ENCODE measurements at regions of chr14 and their contacts with region 1.

Region 1: DNA sequence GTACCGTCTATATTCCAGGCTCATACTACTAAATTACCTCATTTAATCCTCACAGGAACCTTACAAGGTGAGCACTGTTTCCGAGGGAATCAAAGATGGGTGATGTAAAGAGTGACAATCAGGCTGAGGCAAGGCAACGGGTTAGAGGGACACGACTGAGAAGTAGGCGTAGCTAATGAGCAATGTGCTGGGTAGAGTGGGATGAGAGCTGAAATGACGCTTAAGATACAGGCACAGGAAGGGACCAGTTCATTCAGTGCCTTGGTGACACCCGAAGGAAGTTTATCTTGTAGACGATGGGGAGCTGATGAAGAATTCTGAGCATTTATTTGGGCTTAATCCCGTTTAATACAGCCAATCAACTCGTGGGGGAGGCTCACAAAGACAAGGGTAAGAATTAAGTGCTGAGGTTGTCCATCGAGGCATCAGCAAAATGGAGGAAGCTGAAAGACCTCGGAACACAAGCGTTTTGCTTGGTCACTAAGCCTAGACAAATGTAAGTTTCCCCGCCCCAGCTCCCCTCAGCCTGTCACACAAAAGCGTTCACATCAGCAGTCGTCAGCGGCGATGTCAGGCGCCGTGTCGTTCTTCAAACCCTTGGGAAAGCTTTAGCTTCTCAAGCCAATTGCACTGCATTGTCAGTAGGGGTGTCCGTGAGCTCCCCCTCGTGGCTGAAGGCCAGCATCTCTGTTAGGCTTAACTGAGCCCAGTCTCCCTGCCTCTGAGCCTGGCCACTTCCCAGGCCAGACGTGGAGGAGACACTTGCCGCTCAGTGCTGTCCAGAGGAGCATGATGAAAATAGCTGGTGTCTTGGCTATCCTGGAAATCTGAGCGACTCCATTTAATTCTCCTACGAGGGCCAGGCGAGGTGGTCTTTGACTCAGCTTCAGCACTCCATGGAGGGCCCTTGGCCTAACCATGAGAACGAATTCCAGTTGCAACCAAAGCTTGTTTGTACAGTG is 288.5 kb upstream of the G2E3 start:
- DNase-seq: peak; percentile 53
- CTCF ChIP-seq: peak; percentile 86

Region 2: GRCh38 chr14:28751467-28752058 is 1518.9 kb before region 1 on chr14:
- CTCF ChIA-PET with region 1: interaction called, 24 read pairs
- POLR2A ChIA-PET with region 1: no interaction called
- DNase-seq: no peak
- CTCF ChIP-seq: peak; percentile 77

Region 3: DNA sequence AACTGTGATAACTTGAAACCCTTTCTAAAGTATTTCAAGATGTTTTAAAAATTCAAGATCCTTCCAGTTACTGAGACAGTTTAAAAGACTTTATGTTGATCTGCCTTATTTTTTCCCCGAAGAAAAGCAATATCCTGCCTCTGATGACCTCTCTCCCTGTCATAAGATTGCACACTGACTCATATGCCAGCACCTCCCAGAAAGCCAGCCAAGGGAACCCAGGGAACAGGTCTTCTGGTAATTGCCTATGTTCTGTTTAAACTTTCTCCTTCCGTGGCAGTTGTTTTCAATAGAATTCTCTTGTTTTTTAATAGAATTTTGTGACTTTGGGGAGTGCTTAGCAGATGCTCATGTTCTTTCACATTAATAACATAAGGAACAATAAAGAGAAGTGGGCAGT is 42.6 kb before region 1 on chr14:
- CTCF ChIA-PET with region 1: interaction called, 10 read pairs
- POLR2A ChIA-PET with region 1: no interaction called
- DNase-seq: no peak
- CTCF ChIP-seq: no peak

Region 4: DNA sequence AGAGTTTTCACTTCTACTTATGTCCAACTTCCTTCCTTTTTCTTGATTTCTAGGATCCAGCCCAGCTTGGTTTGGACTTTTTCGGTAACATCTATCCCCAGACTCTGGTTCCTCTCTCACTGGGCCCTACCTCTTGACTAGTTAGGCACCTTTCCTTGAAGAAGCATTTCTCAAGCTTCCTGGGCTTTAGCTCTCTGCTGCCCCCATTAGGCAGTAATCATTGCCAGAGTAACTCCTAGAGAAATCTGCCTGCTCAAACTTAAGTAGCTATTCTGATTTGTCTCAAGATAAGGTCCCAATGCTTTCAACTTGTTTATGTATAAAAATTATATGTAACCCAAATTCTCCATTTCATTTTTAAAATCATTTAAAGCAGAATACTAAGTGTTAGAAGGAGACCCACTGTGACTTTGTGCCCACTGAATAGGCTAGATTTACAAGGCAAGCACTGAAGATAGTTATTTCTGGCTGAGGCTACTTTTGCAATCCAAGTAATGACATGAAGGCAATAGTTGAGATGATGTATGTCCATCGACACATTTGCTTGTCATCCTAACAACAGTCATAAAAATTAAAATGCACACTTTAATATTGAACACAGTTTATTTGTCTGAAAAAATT is 13.5 kb after region 1 on chr14:
- CTCF ChIA-PET with region 1: interaction called, 98 read pairs
- POLR2A ChIA-PET with region 1: no interaction called
- DNase-seq: peak; percentile 16
- CTCF ChIP-seq: peak; percentile 42

Region 5: DNA sequence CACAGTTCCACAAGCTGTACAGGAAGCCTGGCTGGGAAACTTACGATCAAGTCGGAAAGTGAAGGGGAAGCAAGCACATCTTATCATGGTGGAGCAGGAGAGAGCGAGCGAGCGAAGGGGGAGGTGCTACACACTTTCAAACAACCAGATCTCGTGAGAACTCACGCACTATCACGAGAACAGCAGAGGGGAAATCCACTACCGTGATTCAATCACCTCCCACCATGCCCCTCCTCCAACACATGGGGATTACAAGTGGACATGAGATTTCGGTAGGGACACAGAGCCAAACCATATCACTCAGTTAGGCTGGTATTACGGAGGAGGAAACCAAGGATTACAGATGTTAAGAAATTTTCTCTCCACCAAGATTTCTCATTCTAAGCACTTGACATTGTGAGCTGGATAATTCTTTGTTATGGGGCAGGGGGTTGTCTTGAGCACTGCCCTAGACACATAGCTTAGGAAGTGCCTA is 26.5 kb after region 1 on chr14:
- CTCF ChIA-PET with region 1: interaction called, 15 read pairs
- POLR2A ChIA-PET with region 1: no interaction called
- DNase-seq: no peak
- CTCF ChIP-seq: no peak

Region 6: DNA sequence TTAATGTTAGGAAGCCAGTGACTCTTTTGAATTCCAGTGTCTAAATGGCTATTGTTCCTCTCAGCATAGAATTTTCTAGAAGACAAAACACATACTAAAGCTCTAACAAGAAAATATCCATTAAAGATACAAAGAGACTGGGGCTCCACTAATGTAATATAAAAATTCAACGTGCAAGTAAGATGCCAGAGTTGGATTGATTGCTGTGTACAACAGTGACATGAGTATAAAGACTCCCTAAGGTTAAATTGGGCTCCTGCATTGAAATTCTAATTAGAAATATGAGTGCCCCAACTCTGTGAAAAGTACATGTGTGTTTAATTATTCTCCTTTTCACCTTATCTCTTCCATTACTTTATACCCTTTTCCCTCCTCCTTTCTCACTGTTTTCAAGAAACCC is 34.9 kb after region 1 on chr14:
- CTCF ChIA-PET with region 1: interaction called, 10 read pairs
- POLR2A ChIA-PET with region 1: no interaction called
- DNase-seq: no peak
- CTCF ChIP-seq: no peak

Region 7: GRCh38 chr14:30443368-30444007 is 173.0 kb after region 1 on chr14:
- CTCF ChIA-PET with region 1: interaction called, 13 read pairs
- POLR2A ChIA-PET with region 1: no interaction called
- DNase-seq: peak; percentile 9
- CTCF ChIP-seq: peak; percentile 54